CD4-positive, alpha-beta T cell (primary cell): ENCODE measurements at regions of chr5 and their contacts with region 1.

Region 1: GRCh38 chr5:100903039-100903887 is at the start of gene ST8SIA4:
- DNase-seq: peak; percentile 80 to 96 (median 88)
- ATAC-seq: peak; percentile 73
- H3K4me3 ChIP-seq: peak within 1 kb of the TSS; percentile 92
- H3K4me3 Mint-ChIP-seq: peak within 1 kb of the TSS; percentile 92
- H3K27ac ChIP-seq: peak within 1 kb of the TSS; percentile 83 to 96
- H3K27ac Mint-ChIP-seq: peak within 1 kb of the TSS; percentile 93
- H3K4me1 ChIP-seq: peaks cover 28% of the 10 kb centered on the region
- H3K4me1 Mint-ChIP-seq: peaks cover 53% of the 10 kb centered on the region
- H3K27me3 ChIP-seq: no peaks in the 10 kb centered on the region
- H3K27me3 Mint-ChIP-seq: no peaks in the 10 kb centered on the region
- CTCF ChIP-seq: no peak
- total RNA-seq, gene ST8SIA4: 17.8 to 19.5 TPM

Region 2: DNA sequence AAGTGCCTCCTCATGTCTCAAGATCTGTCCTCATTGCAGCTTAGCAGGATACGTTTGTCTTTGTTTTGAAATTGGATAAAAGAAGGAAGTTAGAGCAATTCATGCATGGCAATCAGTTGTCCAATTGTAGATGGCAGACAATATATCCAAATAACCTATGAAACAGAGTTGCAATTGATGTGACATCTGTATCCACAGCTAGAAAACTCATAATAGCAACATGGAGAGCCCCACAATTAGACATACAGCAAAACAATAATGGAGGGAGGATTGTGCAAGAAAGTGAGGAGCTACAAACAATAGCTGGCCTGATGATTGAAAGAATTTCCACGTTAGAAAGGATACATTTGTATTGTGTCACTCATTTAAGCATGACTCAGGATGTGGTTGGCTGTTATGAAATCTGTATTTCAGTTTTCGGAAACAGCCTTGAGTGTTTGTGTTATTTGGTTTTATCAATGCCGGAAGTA is 236.1 kb before region 1 on chr5:
- CTCF ChIA-PET with region 1: no interaction called
- POLR2A ChIA-PET with region 1: interaction called, 11 read pairs
- intact Hi-C with region 1: no loop called
- DNase-seq: peak in 3 of 14 experiments; percentile 56 to 82 (median 57)
- ATAC-seq: peak; percentile 73
- H3K4me3 ChIP-seq: no peak overlapping the region
- H3K4me3 Mint-ChIP-seq: no peak overlapping the region
- H3K27ac ChIP-seq: no peak overlapping the region
- H3K27ac Mint-ChIP-seq: no peak overlapping the region
- H3K4me1 ChIP-seq: peaks cover 3% of the 10 kb centered on the region
- H3K4me1 Mint-ChIP-seq: peaks cover 10% of the 10 kb centered on the region
- H3K27me3 ChIP-seq: no peaks in the 10 kb centered on the region
- H3K27me3 Mint-ChIP-seq: no peaks in the 10 kb centered on the region
- CTCF ChIP-seq: no peak

Region 3: DNA sequence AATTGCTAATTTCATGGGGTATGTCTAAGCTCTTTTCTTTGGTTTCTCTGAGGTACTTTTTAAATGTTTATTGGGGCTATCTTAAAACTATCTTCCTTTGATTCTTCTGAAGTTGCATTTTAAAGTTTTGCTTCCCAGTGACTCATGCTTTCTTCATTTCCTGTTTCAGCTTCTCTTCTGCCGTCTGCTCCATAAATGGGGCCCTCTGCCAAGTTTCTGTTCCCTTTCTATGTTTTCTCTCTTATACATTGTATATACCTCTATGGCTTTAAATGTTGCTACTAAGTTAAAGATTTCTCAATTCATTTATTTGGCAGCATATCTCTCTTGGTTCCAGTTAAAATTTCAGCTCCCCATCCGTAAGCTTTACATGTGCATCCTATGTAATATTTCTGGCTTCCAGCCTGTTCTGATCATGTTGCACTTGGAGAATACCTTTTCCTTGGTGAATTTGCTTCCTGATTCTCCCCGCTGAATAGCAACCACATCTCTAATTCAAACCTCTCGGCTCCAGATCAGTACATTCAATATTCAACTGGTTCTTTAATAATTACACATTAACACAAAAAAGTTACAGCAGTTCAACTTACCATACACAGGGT is 125.5 kb before region 1 on chr5:
- CTCF ChIA-PET with region 1: no interaction called
- POLR2A ChIA-PET with region 1: interaction called, 48 read pairs
- intact Hi-C with region 1: loop called in 1 of 2 experiments (anchors 5 kb)
- DNase-seq: peak in 4 of 14 experiments; percentile 26 to 66 (median 50)
- ATAC-seq: peak; percentile 29
- H3K4me3 ChIP-seq: no peak overlapping the region
- H3K4me3 Mint-ChIP-seq: no peak overlapping the region
- H3K27ac ChIP-seq: no peak overlapping the region
- H3K27ac Mint-ChIP-seq: no peak overlapping the region
- H3K4me1 ChIP-seq: peaks cover 7% of the 10 kb centered on the region
- H3K4me1 Mint-ChIP-seq: peaks cover 37% of the 10 kb centered on the region
- H3K27me3 ChIP-seq: no peaks in the 10 kb centered on the region
- H3K27me3 Mint-ChIP-seq: no peaks in the 10 kb centered on the region
- CTCF ChIP-seq: no peak

Region 4: GRCh38 chr5:100856462-100856861 is 46.8 kb before region 1 on chr5:
- CTCF ChIA-PET with region 1: interaction called, 5 read pairs
- POLR2A ChIA-PET with region 1: interaction called, 11 read pairs
- intact Hi-C with region 1: no loop called
- DNase-seq: no peak
- ATAC-seq: no peak
- H3K4me3 ChIP-seq: no peak overlapping the region
- H3K4me3 Mint-ChIP-seq: no peak overlapping the region
- H3K27ac ChIP-seq: no peak overlapping the region
- H3K27ac Mint-ChIP-seq: peak overlapping the region; percentile 22
- H3K4me1 ChIP-seq: no peaks in the 10 kb centered on the region
- H3K4me1 Mint-ChIP-seq: peaks cover 75% of the 10 kb centered on the region
- H3K27me3 ChIP-seq: no peaks in the 10 kb centered on the region
- H3K27me3 Mint-ChIP-seq: no peaks in the 10 kb centered on the region
- CTCF ChIP-seq: no peak

Region 5: DNA sequence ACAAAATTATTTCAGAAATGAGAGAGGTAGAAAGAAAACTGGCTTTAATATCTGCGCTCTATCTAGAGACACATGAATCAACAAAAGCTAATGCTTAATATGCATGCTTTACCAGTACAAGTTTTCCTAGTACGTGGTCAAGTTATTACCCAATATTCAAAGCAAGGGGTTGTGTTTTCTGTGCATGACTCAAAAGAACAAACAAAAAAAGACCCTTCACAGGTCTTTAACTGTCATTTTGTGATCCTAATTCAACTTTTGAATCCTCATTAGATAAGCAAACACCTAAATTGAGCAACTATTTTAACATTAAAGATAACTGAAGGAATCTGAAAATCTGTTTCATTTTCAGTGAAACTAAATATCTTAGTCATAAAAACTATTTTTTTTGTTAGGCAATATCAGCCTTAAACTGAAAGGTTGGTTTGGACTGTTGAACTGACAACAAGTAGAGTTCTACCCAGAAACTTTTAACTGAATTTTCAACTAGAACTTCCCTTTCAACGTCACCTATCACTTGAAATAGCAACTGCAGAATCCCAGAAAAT is 12.7 kb before region 1 on chr5:
- CTCF ChIA-PET with region 1: interaction called, 14 read pairs
- POLR2A ChIA-PET with region 1: interaction called, 181 read pairs
- intact Hi-C with region 1: loop called in 1 of 2 experiments (anchors 1 kb)
- DNase-seq: peak in 3 of 14 experiments; percentile 27 to 43 (median 28)
- ATAC-seq: no peak
- H3K4me3 ChIP-seq: peak overlapping the region; percentile 19
- H3K4me3 Mint-ChIP-seq: peak overlapping the region; percentile 79
- H3K27ac ChIP-seq: peak overlapping the region in 1 of 2 donors; percentile 39
- H3K27ac Mint-ChIP-seq: peak overlapping the region; percentile 86
- H3K4me1 ChIP-seq: no peaks in the 10 kb centered on the region
- H3K4me1 Mint-ChIP-seq: peaks cover 80% of the 10 kb centered on the region
- H3K27me3 ChIP-seq: no peaks in the 10 kb centered on the region
- H3K27me3 Mint-ChIP-seq: no peaks in the 10 kb centered on the region
- CTCF ChIP-seq: no peak

Region 6: GRCh38 chr5:101143526-101143925 is 240.3 kb after region 1 on chr5:
- CTCF ChIA-PET with region 1: no interaction called
- POLR2A ChIA-PET with region 1: no interaction called
- intact Hi-C with region 1: no loop called
- DNase-seq: no peak
- ATAC-seq: no peak
- H3K4me3 ChIP-seq: no peak overlapping the region
- H3K4me3 Mint-ChIP-seq: no peak overlapping the region
- H3K27ac ChIP-seq: no peak overlapping the region
- H3K27ac Mint-ChIP-seq: no peak overlapping the region
- H3K4me1 ChIP-seq: no peaks in the 10 kb centered on the region
- H3K4me1 Mint-ChIP-seq: no peaks in the 10 kb centered on the region
- H3K27me3 ChIP-seq: peaks cover 0 to 2% of the 10 kb centered on the region in 2 experiments
- H3K27me3 Mint-ChIP-seq: no peaks in the 10 kb centered on the region
- CTCF ChIP-seq: no peak